Panc1 (cell line): ENCODE measurements at regions of chr17 and their contacts with region 1.

Region 1: DNA sequence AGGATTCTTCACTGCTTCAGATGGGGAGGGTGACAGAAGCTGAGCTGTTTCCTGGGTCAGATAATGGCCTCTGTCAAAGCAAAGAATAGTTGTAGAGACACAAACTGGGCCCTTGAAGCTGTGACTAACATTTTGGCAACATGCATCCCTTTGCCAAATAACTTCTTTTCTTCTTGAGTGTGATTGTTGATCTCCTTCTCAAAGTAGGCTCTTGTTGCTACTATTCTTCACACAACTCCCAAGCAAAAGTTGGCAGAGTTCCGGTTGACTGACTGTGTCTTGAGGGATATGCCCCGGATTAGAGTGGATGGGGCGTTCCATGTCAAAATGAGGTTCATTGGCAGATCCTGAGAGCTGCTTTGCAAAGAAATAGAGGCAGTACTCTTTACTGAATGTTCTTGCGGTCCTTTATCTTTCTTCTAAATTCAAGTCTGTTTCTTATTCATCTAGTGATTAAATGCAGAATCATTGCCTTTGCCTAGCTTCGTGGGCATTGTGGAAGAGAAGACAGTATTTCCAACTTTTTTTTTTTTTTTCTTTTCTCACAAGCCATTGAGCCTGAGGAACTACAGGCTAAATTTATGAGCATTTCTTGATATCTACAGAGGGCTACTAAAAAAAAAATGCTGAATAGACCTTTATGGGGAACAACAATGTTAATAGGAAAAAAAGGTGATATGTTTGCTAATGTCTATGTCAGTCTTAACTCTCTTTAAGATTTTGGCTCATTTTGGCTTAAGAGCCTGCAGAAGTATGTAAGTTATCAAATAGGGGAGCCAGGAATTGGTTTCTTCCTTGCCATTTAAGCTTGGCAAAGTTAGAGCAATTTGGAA is 5.8 kb downstream of the WIPF2 start:
- DNase-seq: no peak
- ATAC-seq: no peak
- H3K4me3 ChIP-seq: no peak overlapping the region
- H3K27ac ChIP-seq: 0 out of 2 replicates have a peak overlapping the region, but pooled peaks have one; percentile 9
- H3K4me1 ChIP-seq: no peaks in the 10 kb centered on the region
- H3K27me3 ChIP-seq: no peaks in the 10 kb centered on the region
- CTCF ChIP-seq: no peak

Region 2: GRCh38 chr17:40058186-40058784 is 166.6 kb before region 1 on chr17:
- CTCF ChIA-PET with region 1: no interaction called
- POLR2A ChIA-PET with region 1: no interaction called
- in situ Hi-C with region 1: no loop called
- intact Hi-C with region 1: no loop called
- DNase-seq: no peak
- ATAC-seq: no peak
- H3K4me3 ChIP-seq: no peak overlapping the region; a peak in 1 of 4 replicates
- H3K27ac ChIP-seq: no peak overlapping the region
- H3K4me1 ChIP-seq: peaks cover 7% of the 10 kb centered on the region
- H3K27me3 ChIP-seq: no peaks in the 10 kb centered on the region
- CTCF ChIP-seq: no peak

Region 3: DNA sequence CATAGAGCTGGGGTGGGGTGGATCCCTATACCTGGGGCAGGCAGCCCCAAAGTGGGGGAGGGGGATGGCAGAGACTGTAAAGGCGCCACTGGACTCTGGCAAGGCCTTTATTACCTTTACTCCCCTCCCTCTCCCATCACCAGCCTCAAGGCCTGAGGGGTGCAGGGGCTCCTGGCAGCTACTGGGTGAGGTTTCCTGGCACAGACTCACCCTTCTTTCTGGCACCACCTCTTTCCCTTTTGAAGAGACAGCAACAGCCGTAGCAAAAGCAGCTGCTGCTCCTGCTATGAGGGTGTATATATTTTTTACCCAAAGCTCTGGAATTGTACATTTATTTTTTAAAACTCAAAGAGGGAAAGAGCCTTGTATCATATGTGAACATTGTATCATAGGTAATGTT is 30.1 kb before region 1 on chr17:
- CTCF ChIA-PET with region 1: no interaction called
- POLR2A ChIA-PET with region 1: no interaction called
- in situ Hi-C with region 1: no loop called
- intact Hi-C with region 1: no loop called
- DNase-seq: no peak
- ATAC-seq: no peak
- H3K4me3 ChIP-seq: no peak overlapping the region
- H3K27ac ChIP-seq: no peak overlapping the region
- H3K4me1 ChIP-seq: 0 out of 2 replicates have a peak, but pooled peaks cover 5% of the 10 kb centered on the region
- H3K27me3 ChIP-seq: no peaks in the 10 kb centered on the region
- CTCF ChIP-seq: no peak

Region 4: GRCh38 chr17:40247926-40248495 is 23.1 kb after region 1 on chr17:
- CTCF ChIA-PET with region 1: no interaction called
- POLR2A ChIA-PET with region 1: no interaction called
- in situ Hi-C with region 1: no loop called
- intact Hi-C with region 1: no loop called
- DNase-seq: no peak
- ATAC-seq: no peak
- H3K4me3 ChIP-seq: no peak overlapping the region
- H3K27ac ChIP-seq: no peak overlapping the region
- H3K4me1 ChIP-seq: peaks cover 8% of the 10 kb centered on the region
- H3K27me3 ChIP-seq: no peaks in the 10 kb centered on the region
- CTCF ChIP-seq: no peak

Region 5: DNA sequence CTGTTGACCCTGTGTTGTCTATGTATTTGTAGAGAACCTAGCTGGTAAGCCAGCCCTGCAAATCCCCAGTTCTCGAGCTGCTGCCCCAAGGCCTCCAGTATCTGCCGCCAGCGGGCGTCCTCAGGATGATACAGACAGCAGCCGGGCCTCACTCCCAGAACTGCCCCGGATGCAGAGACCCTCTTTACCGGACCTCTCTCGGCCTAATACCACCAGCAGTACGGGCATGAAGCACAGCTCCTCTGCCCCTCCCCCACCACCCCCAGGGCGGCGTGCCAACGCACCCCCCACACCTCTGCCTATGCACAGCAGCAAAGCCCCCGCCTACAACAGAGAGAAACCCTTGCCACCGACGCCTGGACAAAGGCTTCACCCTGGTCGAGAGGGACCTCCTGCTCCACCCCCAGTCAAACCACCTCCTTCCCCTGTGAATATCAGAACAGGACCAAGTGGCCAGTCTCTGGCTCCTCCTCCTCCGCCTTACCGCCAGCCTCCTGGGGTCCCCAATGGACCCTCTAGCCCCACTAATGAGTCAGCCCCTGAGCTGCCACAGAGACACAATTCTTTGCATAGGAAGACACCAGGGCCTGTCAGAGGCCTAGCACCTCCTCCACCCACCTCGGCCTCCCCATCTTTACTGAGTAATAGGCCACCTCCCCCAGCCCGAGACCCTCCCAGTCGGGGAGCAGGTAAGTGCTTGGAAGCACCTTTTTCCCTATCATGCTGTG is 39.7 kb after region 1 on chr17:
- CTCF ChIA-PET with region 1: no interaction called
- POLR2A ChIA-PET with region 1: interaction called, 10 read pairs
- in situ Hi-C with region 1: no loop called
- intact Hi-C with region 1: no loop called
- DNase-seq: no peak
- ATAC-seq: no peak
- H3K4me3 ChIP-seq: no peak overlapping the region
- H3K27ac ChIP-seq: no peak overlapping the region
- H3K4me1 ChIP-seq: no peaks in the 10 kb centered on the region
- H3K27me3 ChIP-seq: no peaks in the 10 kb centered on the region
- CTCF ChIP-seq: no peak